Activated T-helper 2 cell treated with anti-CD3 and anti-CD28 coated beads, Interferon-gamma antibody, Interleukin-2, Interleukin-4, amounts not matched to agents 10 μg/mL and 5 μg/mL and 100 μg/mL, durations not matched to agents 14 hours and 24 hours and 36 hours (primary cell): ENCODE measurements at regions of chr4 and their contacts with region 1.

Region 1: GRCh38 chr4:80184053-80184790 is 13.1 kb upstream of the PRDM8 start:
- DNase-seq: peak; percentile 89
- H3K4me3 Mint-ChIP-seq: peak overlapping the region; percentile 99
- H3K27ac Mint-ChIP-seq: peak overlapping the region; percentile 95
- H3K4me1 Mint-ChIP-seq: peaks cover 49% of the 10 kb centered on the region
- H3K27me3 Mint-ChIP-seq: peaks cover 35% of the 10 kb centered on the region

Region 2: GRCh38 chr4:79831701-79832514 is 352.3 kb before region 1 on chr4:
- intact Hi-C with region 1: loop called (anchors 5 kb)
- DNase-seq: no peak
- H3K4me3 Mint-ChIP-seq: no peak overlapping the region
- H3K27ac Mint-ChIP-seq: no peak overlapping the region
- H3K4me1 Mint-ChIP-seq: peaks cover 4% of the 10 kb centered on the region
- H3K27me3 Mint-ChIP-seq: peaks cover 20% of the 10 kb centered on the region

Region 3: GRCh38 chr4:80058740-80059139 is 125.5 kb before region 1 on chr4:
- intact Hi-C with region 1: loop called (anchors 1 kb)
- DNase-seq: peak; percentile 41
- H3K4me3 Mint-ChIP-seq: peak overlapping the region; percentile 72
- H3K27ac Mint-ChIP-seq: peak overlapping the region; percentile 94
- H3K4me1 Mint-ChIP-seq: peaks cover 42% of the 10 kb centered on the region
- H3K27me3 Mint-ChIP-seq: no peaks in the 10 kb centered on the region

Region 4: GRCh38 chr4:80138551-80139538 is 45.4 kb before region 1 on chr4:
- intact Hi-C with region 1: loop called (anchors 1 kb)
- DNase-seq: peak; percentile 54
- H3K4me3 Mint-ChIP-seq: peak overlapping the region; percentile 2
- H3K27ac Mint-ChIP-seq: peak overlapping the region; percentile 83
- H3K4me1 Mint-ChIP-seq: peaks cover 62% of the 10 kb centered on the region
- H3K27me3 Mint-ChIP-seq: no peaks in the 10 kb centered on the region

Region 5: DNA sequence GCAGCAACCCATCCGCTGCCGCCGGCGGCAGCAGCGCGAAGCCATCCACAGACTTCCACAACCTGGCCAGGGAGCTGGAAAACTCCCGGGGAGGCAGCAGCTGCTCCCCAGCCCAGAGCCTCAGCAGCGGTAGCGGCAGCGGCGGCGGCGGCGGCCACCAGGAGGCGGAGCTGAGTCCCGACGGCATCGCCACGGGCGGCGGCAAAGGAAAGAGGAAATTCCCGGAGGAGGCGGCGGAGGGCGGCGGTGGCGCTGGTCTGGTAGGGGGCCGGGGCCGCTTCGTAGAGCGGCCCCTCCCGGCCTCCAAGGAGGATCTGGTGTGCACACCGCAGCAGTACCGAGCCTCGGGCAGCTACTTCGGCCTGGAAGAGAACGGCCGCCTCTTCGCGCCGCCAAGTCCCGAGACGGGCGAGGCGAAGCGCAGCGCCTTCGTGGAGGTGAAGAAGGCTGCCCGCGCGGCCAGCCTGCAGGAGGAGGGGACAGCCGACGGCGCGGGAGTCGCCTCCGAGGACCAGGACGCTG is 18.0 kb after region 1 on chr4:
- intact Hi-C with region 1: loop called (anchors 1 kb)
- DNase-seq: peak; percentile 70
- H3K4me3 Mint-ChIP-seq: peak overlapping the region; percentile 72
- H3K27ac Mint-ChIP-seq: peak overlapping the region; percentile 33
- H3K4me1 Mint-ChIP-seq: peaks cover 19% of the 10 kb centered on the region
- H3K27me3 Mint-ChIP-seq: peaks cover 58% of the 10 kb centered on the region

Region 6: GRCh38 chr4:80266253-80266901 is 82.2 kb after region 1 on chr4 and contains the start of gene FGF5:
- intact Hi-C with region 1: no loop called
- DNase-seq: no peak
- H3K4me3 Mint-ChIP-seq: no peak within 1 kb of the TSS
- H3K27ac Mint-ChIP-seq: no peak within 1 kb of the TSS
- H3K4me1 Mint-ChIP-seq: peaks cover 14% of the 10 kb centered on the region
- H3K27me3 Mint-ChIP-seq: peaks cover 82% of the 10 kb centered on the region
- total RNA-seq, gene FGF5: 0.02 TPM in 1 of 2 replicates, not detected in the other